ENCODE measurements at regions of chr11 and their contacts with region 1.

Region 1: DNA sequence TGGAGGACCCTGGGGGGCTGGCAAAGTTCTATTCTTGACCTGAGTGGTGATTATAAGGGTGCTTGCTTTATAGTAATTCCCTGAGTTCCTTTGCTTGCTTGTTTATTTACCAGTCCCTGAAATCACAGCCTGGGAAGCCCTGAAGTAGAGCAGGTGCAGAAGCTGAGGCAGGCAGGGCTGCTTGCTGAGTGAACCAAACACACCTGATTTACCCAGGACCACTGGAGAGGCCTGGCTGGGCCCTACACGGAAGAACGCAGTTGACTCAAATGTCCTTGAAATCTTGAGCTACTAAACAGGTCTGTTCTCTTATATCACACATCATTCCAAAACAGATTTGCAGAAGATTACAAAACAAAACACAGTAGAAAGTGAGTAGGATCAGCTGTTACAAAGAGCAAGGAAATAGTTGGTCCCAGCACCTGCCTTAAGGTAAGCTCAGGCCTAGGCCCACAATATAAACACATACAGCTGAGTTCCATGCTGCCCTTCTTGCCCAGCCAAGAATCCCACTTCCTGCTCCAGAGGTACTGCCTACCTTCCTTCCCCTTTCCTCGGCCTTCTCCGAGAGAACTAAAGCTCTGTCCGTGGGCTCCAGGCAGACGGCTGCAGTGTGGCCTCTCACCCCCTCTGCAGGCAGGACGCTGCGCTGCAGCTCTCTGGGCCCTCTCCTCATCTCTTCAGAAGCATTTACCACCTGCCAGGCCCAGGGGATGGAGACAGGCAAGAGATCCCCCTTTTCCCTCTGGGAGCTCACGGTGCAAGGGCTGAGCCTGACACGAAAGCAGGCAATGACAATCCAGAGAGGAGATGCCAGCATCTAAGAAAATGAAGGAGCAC is 46.1 kb upstream of the SCUBE2 start:
- DNase-seq: peak; percentile 75 to 94
- H3K4me3 ChIP-seq: no peak overlapping the region
- CTCF ChIP-seq: no peak
- POLR2A ChIP-seq: no peak

Region 2: DNA sequence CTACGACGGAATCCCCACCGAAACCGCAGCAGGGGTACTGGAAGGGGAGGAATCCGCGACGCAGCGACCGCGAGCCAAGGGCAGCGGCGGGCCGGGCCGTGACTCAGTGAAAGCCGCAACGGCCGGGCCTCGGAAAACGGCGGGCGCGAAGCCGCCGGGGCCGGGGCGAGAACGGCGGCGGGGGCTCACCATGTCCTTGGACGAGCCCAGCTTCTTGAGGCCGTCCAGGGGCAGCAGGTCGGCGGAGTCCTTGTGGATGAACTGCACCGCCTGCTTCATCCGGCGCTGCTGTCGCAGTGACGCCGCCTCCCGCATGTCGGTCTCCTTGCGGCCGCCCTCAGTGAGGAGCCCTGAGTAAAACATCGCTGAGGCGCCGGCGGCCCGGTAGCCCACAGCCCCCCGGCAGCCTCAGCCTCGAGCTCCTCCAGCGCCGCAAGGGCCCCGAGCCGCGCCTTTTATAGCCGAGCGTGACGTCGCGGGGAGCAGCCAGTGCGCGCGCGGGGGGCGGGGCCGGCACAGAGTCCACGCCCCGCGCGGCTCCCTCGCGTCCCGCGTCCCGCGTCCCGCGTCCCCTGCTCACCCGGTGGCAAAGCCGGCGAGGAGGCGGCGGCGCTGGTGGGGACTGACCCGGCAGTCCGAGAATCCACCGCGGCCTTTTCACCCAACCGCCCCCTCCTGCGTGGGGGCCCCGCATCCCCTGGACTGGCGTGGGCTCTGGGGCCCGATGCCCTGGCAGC is 133.8 kb before region 1 on chr11 and contains the start of gene NRIP3:
- intact Hi-C with region 1: loop called (anchors 10 kb)
- DNase-seq: peak; percentile 39 to 94
- H3K4me3 ChIP-seq: peak within 1 kb of the TSS; percentile 28
- CTCF ChIP-seq: no peak
- POLR2A ChIP-seq: no peak
- total RNA-seq, gene NRIP3: 1.3 to 15.6 (median 1.9) TPM